ENCODE measurements at regions of chr3 and their contacts with region 1.

Region 1: GRCh38 chr3:43769471-43770425 is 79.0 kb downstream of the ABHD5 start:
- DNase-seq: peak; percentile 98 to 100
- ATAC-seq: peak; percentile 95
- H3K4me3 ChIP-seq: no peak overlapping the region
- H3K27ac ChIP-seq: peak overlapping the region; percentile 82 to 85
- H3K4me1 ChIP-seq: no peaks in the 10 kb centered on the region
- H3K27me3 ChIP-seq: no peaks in the 10 kb centered on the region

Region 2: GRCh38 chr3:43286115-43286840 is 483.5 kb before region 1 on chr3 and contains the start of gene SNRK:
- intact Hi-C with region 1: loop called in 1 of 2 experiments (anchors 10 kb)
- DNase-seq: peak; percentile 89 to 97
- ATAC-seq: peak; percentile 96
- H3K4me3 ChIP-seq: peak within 1 kb of the TSS; percentile 93 to 95
- H3K27ac ChIP-seq: peak within 1 kb of the TSS; percentile 9 to 59
- H3K4me1 ChIP-seq: peaks cover 3 to 7% of the 10 kb centered on the region in 2 donors
- H3K27me3 ChIP-seq: no peaks in the 10 kb centered on the region
- total RNA-seq, gene SNRK: 66.9 to 95.1 TPM

Region 3: GRCh38 chr3:43378066-43378935 is 391.4 kb before region 1 on chr3:
- intact Hi-C with region 1: no loop called
- DNase-seq: no peak
- ATAC-seq: no peak
- H3K4me3 ChIP-seq: no peak overlapping the region
- H3K27ac ChIP-seq: peak overlapping the region; percentile 48 to 83
- H3K4me1 ChIP-seq: peaks cover 0 to 2% of the 10 kb centered on the region in 2 donors
- H3K27me3 ChIP-seq: no peaks in the 10 kb centered on the region

Region 4: DNA sequence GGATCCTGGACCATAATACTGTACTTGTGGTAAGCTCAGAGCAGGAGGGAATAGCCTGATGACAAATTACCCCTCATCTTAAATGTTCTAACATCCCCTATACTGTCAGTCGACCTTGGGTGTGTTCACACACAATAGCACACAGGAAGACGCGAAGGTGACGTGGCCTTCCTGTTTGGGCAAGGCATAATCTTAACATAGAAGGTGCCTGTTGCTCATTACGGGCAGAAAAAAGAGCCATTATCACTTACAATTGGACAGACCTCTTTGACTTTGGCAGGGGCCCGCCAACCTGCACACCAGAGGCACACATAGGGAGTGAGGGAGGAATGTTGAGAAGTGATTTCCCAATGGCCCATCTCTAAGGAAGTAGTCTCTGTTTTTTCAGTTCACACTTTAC is 292.1 kb before region 1 on chr3:
- intact Hi-C with region 1: no loop called
- DNase-seq: no peak
- ATAC-seq: no peak
- H3K4me3 ChIP-seq: no peak overlapping the region
- H3K27ac ChIP-seq: no peak overlapping the region
- H3K4me1 ChIP-seq: no peaks in the 10 kb centered on the region
- H3K27me3 ChIP-seq: no peaks in the 10 kb centered on the region

Region 5: GRCh38 chr3:43584043-43584826 is 185.5 kb before region 1 on chr3:
- intact Hi-C with region 1: no loop called
- DNase-seq: no peak
- ATAC-seq: no peak
- H3K4me3 ChIP-seq: no peak overlapping the region
- H3K27ac ChIP-seq: no peak overlapping the region
- H3K4me1 ChIP-seq: peaks cover 0 to 3% of the 10 kb centered on the region in 2 donors
- H3K27me3 ChIP-seq: no peaks in the 10 kb centered on the region

Region 6: DNA sequence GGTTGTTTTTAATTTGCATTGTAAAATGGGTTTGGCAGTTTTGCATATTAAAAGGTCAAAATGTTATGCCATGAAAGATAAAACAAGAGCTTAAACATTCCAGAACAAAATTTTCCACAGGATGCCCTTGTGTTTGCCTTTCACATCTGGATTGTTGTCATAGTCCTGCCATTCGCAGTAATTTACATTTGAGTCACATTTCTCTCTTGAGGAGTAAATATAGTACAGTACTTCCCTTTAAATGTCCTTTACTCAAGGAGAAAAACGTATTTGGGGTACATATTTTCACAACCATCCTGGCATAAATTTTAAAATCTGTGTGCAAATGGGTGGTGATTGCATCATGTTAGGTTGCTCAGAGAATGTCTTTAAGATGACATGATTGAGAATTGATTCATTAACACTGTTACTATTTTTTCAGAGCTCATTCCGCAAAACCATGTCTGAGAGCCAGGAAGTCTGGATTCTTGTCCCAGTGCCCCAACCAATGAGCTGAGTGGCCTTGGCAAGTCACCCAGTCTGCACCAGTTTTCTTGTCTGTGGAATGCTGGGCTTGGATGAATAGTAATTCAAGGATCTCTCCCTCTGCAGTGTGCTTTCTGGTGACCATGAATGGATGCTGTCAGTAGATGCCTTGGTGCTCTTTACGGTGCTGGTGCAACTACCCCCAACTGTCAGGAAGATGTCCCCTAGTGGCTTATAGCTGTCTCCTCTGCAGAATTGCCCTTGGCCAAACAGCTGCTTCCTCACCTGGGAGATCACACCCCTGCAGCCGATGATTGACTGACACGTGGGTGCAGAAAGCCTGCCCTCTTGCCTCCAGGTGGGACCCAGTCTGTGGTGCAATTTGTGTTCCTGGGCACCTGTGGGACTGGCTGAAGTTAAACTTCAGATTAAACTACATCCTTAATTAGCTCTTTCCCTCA is 36.0 kb before region 1 on chr3:
- intact Hi-C with region 1: loop called in 1 of 2 experiments (anchors 5 kb)
- DNase-seq: peak; percentile 88
- ATAC-seq: peak; percentile 84
- H3K4me3 ChIP-seq: no peak overlapping the region
- H3K27ac ChIP-seq: peak overlapping the region; percentile 72 to 91
- H3K4me1 ChIP-seq: peaks cover under 1 to 9% of the 10 kb centered on the region in 2 donors
- H3K27me3 ChIP-seq: no peaks in the 10 kb centered on the region

Region 7: GRCh38 chr3:43879166-43879565 is 109.4 kb after region 1 on chr3:
- intact Hi-C with region 1: loop called in 1 of 2 experiments (anchors 10 kb)
- DNase-seq: peak in 1 of 2 donors; percentile 16
- ATAC-seq: no peak
- H3K4me3 ChIP-seq: no peak overlapping the region
- H3K27ac ChIP-seq: no peak overlapping the region
- H3K4me1 ChIP-seq: no peaks in the 10 kb centered on the region
- H3K27me3 ChIP-seq: no peaks in the 10 kb centered on the region

Region 8: GRCh38 chr3:44198284-44199269 is 428.8 kb after region 1 on chr3:
- intact Hi-C with region 1: loop called (anchors 5 to 10 kb)
- DNase-seq: peak in 1 of 2 donors; percentile 68
- ATAC-seq: peak; percentile 88
- H3K4me3 ChIP-seq: no peak overlapping the region
- H3K27ac ChIP-seq: no peak overlapping the region
- H3K4me1 ChIP-seq: no peaks in the 10 kb centered on the region
- H3K27me3 ChIP-seq: no peaks in the 10 kb centered on the region

Measured in aorta (tissue), 5 donors.